Body of pancreas (tissue), 4 donors: ENCODE measurements at regions of chr17 and their contacts with region 1.

Region 1: GRCh38 chr17:10944819-10945218 is 106.9 kb upstream of the PIRT start:
- DNase-seq: no peak
- ATAC-seq: no peak
- H3K4me3 ChIP-seq: no peak overlapping the region
- H3K27ac ChIP-seq: no peak overlapping the region
- H3K4me1 ChIP-seq: no peaks in the 10 kb centered on the region
- H3K27me3 ChIP-seq: no peaks in the 10 kb centered on the region
- CTCF ChIP-seq: no peak
- POLR2A ChIP-seq: no peak

Region 2: GRCh38 chr17:10875979-10876555 is 68.8 kb before region 1 on chr17:
- intact Hi-C with region 1: no loop called
- DNase-seq: peak; percentile 36 to 62 (median 53)
- ATAC-seq: no peak
- H3K4me3 ChIP-seq: no peak overlapping the region
- H3K27ac ChIP-seq: no peak overlapping the region
- H3K4me1 ChIP-seq: no peaks in the 10 kb centered on the region
- H3K27me3 ChIP-seq: peaks cover 0 to 4% of the 10 kb centered on the region in 2 donors
- CTCF ChIP-seq: peak; percentile 56 to 68 (median 64)
- POLR2A ChIP-seq: no peak

Region 3: GRCh38 chr17:10992106-10992880 is 47.5 kb after region 1 on chr17:
- intact Hi-C with region 1: no loop called
- DNase-seq: peak in 2 of 4 donors; percentile 8 to 10
- ATAC-seq: no peak
- H3K4me3 ChIP-seq: no peak overlapping the region
- H3K27ac ChIP-seq: no peak overlapping the region
- H3K4me1 ChIP-seq: no peaks in the 10 kb centered on the region
- H3K27me3 ChIP-seq: no peaks in the 10 kb centered on the region
- CTCF ChIP-seq: no peak
- POLR2A ChIP-seq: no peak

Region 4: DNA sequence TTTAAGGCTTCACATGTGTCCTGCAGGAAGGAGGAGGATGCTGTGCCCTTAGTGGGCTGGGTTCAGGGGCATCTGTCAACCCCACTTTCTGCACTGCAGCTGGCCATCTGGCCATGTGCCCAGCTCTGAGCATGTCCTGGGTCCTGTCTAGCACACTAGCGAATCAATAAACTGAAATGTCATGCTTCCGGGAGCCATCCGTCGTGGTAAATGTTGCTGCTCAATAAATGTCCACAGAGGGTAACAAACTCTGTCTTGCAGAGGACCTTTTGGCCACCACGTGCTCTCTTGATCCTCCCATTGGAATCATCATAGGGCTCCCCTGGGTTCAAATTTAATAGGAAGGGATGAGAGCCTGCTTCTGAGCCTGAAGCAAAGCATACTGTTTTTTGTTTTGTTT is 61.7 kb after region 1 on chr17:
- intact Hi-C with region 1: loop called (anchors 10 kb)
- DNase-seq: no peak
- ATAC-seq: no peak
- H3K4me3 ChIP-seq: no peak overlapping the region
- H3K27ac ChIP-seq: no peak overlapping the region
- H3K4me1 ChIP-seq: no peaks in the 10 kb centered on the region
- H3K27me3 ChIP-seq: no peaks in the 10 kb centered on the region
- CTCF ChIP-seq: no peak
- POLR2A ChIP-seq: no peak

Region 5: GRCh38 chr17:11779892-11780291 is 835.1 kb after region 1 on chr17:
- intact Hi-C with region 1: no loop called
- DNase-seq: no peak
- ATAC-seq: no peak
- H3K4me3 ChIP-seq: no peak overlapping the region
- H3K27ac ChIP-seq: no peak overlapping the region
- H3K4me1 ChIP-seq: no peaks in the 10 kb centered on the region
- H3K27me3 ChIP-seq: no peaks in the 10 kb centered on the region
- CTCF ChIP-seq: no peak
- POLR2A ChIP-seq: no peak